Endothelial cell of umbilical vein (primary cell): ENCODE measurements at regions of chr7 and their contacts with region 1.

Region 1: GRCh38 chr7:123494193-123494796 is 40.1 kb downstream of the IQUB start:
- DNase-seq: peak; percentile 62
- H3K4me3 ChIP-seq: no peak overlapping the region
- H3K27ac ChIP-seq: no peak overlapping the region
- H3K4me1 ChIP-seq: no peaks in the 10 kb centered on the region
- H3K27me3 ChIP-seq: peaks cover 3 to 10% of the 10 kb centered on the region in 2 experiments
- CTCF ChIP-seq: peak; percentile 25 to 37
- POLR2A ChIP-seq: no peak

Region 2: DNA sequence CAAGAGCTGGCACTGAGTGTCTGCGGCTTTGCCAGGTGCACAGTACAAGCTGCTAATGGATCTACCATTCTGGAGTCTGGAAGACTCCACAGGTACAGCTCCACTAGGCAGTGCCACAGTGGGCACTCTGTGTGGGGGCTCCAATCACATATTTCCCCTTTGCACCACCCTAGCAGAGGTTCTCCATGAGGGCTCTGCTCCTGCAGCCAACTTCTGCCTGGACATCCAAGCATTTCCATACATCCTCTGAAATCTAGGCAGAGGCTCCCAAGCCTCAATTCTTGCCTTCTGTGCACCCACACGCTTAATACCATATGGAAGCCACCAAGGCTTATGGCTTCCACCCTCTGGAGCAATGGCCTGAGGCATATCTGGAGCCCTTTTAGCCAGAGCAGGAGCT is 10.9 kb after region 1 on chr7:
- CTCF ChIA-PET with region 1: interaction called, 14 read pairs
- POLR2A ChIA-PET with region 1: no interaction called
- dilution Hi-C with region 1: no loop called
- intact Hi-C with region 1: no loop called
- DNase-seq: no peak
- H3K4me3 ChIP-seq: no peak overlapping the region
- H3K27ac ChIP-seq: no peak overlapping the region
- H3K4me1 ChIP-seq: no peaks in the 10 kb centered on the region
- H3K27me3 ChIP-seq: no peaks in the 10 kb centered on the region
- CTCF ChIP-seq: no peak
- POLR2A ChIP-seq: no peak

Region 3: GRCh38 chr7:123528265-123528664 is 34.0 kb after region 1 on chr7:
- CTCF ChIA-PET with region 1: interaction called, 33 read pairs
- POLR2A ChIA-PET with region 1: no interaction called
- dilution Hi-C with region 1: no loop called
- intact Hi-C with region 1: no loop called
- DNase-seq: no peak
- H3K4me3 ChIP-seq: no peak overlapping the region
- H3K27ac ChIP-seq: no peak overlapping the region
- H3K4me1 ChIP-seq: peaks cover 3% of the 10 kb centered on the region
- H3K27me3 ChIP-seq: peaks cover 1 to 7% of the 10 kb centered on the region in 2 experiments
- CTCF ChIP-seq: no peak
- POLR2A ChIP-seq: no peak

Region 4: DNA sequence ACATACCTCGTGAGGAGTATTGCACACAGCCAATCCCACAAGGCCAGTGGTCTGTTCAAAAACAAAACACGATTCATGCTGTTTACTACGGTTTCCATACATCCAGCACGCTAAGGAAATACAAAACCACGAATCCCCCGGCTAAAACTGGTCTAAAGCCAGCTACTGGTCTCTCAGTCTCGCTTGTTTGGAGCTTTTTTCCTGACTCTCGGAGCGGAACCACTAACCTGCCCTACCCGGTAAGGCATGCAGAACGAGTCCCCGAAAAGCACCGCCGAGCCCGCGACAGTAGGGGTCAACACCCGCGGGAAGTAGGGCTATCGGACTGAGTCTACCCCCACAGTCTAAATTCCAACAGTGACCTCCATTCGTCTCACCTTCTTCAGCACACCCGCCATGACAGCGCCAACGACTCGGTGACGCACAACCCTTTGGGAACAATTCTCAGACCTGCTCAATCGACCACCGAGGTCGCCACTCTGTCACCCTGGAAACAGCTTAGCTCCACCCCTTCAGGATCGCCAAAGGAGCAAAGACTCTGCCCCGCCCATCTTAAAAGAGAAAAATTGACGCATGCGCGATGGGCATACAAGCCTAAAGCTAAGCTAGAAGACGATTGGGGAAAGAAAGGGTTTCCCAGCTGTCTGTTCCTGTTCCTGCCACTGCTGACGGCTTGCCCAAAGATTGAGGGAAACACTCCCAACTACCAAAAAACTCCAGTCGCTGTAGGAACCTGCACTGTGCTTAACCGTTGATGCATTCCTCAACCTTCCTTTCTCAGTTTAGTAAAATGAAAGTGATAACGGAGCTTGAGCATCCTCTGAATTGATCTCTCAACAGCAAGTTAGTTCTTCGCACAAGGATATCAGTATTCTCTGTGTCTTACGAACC is 63.3 kb after region 1 on chr7 and contains the start of gene NDUFA5:
- CTCF ChIA-PET with region 1: interaction called, 20 read pairs
- POLR2A ChIA-PET with region 1: interaction called, 4 read pairs
- dilution Hi-C with region 1: no loop called
- intact Hi-C with region 1: no loop called
- DNase-seq: peak; percentile 99
- H3K4me3 ChIP-seq: peak within 1 kb of the TSS; percentile 66 to 98 (median 88)
- H3K27ac ChIP-seq: peak within 1 kb of the TSS; percentile 75
- H3K4me1 ChIP-seq: peaks cover 6% of the 10 kb centered on the region
- H3K27me3 ChIP-seq: no peaks in the 10 kb centered on the region
- CTCF ChIP-seq: no peak
- POLR2A ChIP-seq: peak; percentile 76
- total RNA-seq, gene NDUFA5: 57.6 and 62.3 TPM in 2 replicates

Region 5: DNA sequence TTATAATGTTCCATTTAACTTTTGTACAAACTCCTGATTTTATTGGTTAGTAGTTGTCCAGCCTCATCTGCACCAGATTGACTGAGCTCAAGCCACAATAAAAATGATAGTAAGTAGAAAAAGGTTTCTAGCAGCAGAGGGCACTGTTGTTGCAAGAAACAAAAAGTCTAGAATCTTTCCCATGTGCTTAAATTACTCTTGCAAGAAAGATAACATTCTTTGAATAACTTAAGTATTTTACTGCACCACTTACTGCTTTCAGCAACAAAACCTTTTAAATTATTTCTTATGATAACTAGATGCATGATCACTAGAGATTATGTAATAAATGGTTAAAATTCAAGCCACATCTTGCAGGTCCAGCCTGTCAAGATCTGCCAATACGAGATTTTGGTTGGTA is 188.4 kb after region 1 on chr7:
- CTCF ChIA-PET with region 1: interaction called, 22 read pairs
- POLR2A ChIA-PET with region 1: no interaction called
- dilution Hi-C with region 1: no loop called
- intact Hi-C with region 1: loop called (anchors 5 kb)
- DNase-seq: peak; percentile 72
- H3K4me3 ChIP-seq: no peak overlapping the region
- H3K27ac ChIP-seq: no peak overlapping the region
- H3K4me1 ChIP-seq: no peaks in the 10 kb centered on the region
- H3K27me3 ChIP-seq: no peaks in the 10 kb centered on the region
- CTCF ChIP-seq: peak; percentile 25 to 41
- POLR2A ChIP-seq: no peak

Region 6: GRCh38 chr7:123865517-123866117 is 371.3 kb after region 1 on chr7:
- CTCF ChIA-PET with region 1: interaction called, 124 read pairs
- POLR2A ChIA-PET with region 1: no interaction called
- dilution Hi-C with region 1: no loop called
- intact Hi-C with region 1: no loop called
- DNase-seq: peak; percentile 84
- H3K4me3 ChIP-seq: no peak overlapping the region
- H3K27ac ChIP-seq: peak overlapping the region; percentile 34
- H3K4me1 ChIP-seq: peaks cover 9% of the 10 kb centered on the region
- H3K27me3 ChIP-seq: no peaks in the 10 kb centered on the region
- CTCF ChIP-seq: peak; percentile 41 to 56
- POLR2A ChIP-seq: no peak